T-cell (primary cell): ENCODE measurements at regions of chr1 and their contacts with region 1.

Region 1: GRCh38 chr1:155000726-155001424 is 1.7 kb upstream of the ZBTB7B start:
- DNase-seq: peak in 32 of 35 experiments; percentile 32 to 80 (median 50)
- ATAC-seq: peak; percentile 31 to 44 (median 39)
- H3K4me3 ChIP-seq: peak overlapping the region; percentile 72 to 97
- H3K4me3 Mint-ChIP-seq: peak overlapping the region; percentile 84 to 89 (median 88)
- H3K27ac ChIP-seq: peak overlapping the region; percentile 95
- H3K27ac Mint-ChIP-seq: peak overlapping the region; percentile 84 to 85
- H3K4me1 ChIP-seq: peaks cover 21 to 80% of the 10 kb centered on the region in 2 experiments
- H3K4me1 Mint-ChIP-seq: peaks cover 44 to 52% (median 50%) of the 10 kb centered on the region in 3 donors
- H3K27me3 ChIP-seq: no peaks in the 10 kb centered on the region
- H3K27me3 Mint-ChIP-seq: no peaks in the 10 kb centered on the region

Region 2: DNA sequence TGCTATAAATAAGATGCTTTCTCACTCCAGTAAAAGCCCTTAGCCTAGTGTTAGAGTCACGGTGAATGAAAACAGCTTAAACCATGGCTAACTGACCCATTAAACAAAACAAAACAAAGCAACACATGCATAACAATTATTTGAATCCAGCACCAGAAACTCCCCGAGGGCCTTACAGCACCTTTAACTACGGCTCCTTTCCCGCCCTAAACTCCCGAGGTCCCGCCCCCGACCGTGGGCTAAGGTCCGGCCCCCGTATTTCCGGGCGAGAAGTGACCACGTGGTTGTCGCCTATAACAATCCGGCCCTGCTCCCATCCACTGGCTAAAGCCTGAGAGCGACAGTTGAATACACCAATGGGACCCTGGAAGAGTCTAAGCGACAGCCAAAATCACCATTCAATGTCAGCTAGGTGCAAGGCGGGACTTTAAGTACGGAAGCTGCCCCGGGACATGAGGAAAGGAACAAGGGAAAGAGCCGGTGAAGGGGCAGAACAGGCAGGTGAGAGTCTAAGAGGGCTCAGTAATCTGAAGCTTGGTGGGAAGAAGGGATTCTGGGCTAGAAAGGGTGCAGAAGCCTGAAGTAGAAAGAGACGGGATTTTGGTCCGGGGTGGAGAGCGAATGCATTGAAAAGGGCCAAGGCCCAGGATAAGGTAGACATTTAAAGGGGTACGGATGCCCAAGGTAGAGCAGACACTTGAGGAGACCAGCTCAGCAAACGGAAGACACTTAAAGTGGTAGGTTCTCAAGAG is 17.8 kb before region 1 on chr1 and contains the start of gene FLAD1:
- CTCF ChIA-PET with region 1: interaction called, 3 to 29 read pairs
- POLR2A ChIA-PET with region 1: no interaction called
- DNase-seq: peak; percentile 85 to 98 (median 95)
- ATAC-seq: peak; percentile 99 to 100 (median 100)
- H3K4me3 ChIP-seq: peak within 1 kb of the TSS; percentile 67 to 84
- H3K4me3 Mint-ChIP-seq: no peak within 1 kb of the TSS
- H3K27ac ChIP-seq: peak within 1 kb of the TSS; percentile 54
- H3K27ac Mint-ChIP-seq: no peak within 1 kb of the TSS
- H3K4me1 ChIP-seq: peaks cover 14 to 28% of the 10 kb centered on the region in 2 experiments
- H3K4me1 Mint-ChIP-seq: peaks cover 0 to 17% (median 13%) of the 10 kb centered on the region in 3 donors
- H3K27me3 ChIP-seq: no peaks in the 10 kb centered on the region
- H3K27me3 Mint-ChIP-seq: no peaks in the 10 kb centered on the region
- total RNA-seq, gene FLAD1: 32.8 to 64.3 (median 53.4) TPM

Region 3: DNA sequence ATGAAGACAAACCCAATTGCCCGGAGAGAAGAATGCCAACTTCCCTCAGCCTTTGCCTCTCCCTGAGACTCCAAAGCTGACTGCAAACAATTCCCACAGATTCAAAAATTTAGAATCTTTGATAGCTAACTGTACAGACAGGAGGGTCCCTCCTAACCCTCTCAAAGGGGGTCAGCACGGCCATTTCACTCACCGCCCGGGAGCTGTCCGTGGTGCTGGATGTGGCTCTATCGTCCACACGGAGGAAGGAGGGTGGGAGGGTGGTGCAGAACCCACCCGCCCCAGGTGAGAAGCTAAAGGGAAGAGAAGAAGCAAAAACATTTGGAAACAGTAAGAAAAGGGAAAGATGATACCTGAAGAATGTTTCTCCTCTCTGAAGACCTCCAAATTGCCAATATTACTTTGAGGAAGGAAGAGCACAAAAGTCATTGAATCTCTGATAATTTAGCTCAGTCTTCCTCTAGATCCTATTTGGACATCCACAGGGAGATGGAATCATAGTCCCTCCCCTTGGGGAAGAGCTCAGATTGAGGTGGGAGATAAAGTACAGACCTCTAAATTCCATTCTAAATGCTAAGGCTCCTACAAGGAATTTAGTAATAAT is 1413.7 kb after region 1 on chr1:
- CTCF ChIA-PET with region 1: no interaction called
- POLR2A ChIA-PET with region 1: no interaction called
- DNase-seq: no peak
- ATAC-seq: no peak
- H3K4me3 ChIP-seq: no peak overlapping the region
- H3K4me3 Mint-ChIP-seq: no peak overlapping the region
- H3K27ac ChIP-seq: no peak overlapping the region
- H3K27ac Mint-ChIP-seq: no peak overlapping the region
- H3K4me1 ChIP-seq: peaks cover 0 to 2% of the 10 kb centered on the region in 2 experiments
- H3K4me1 Mint-ChIP-seq: peaks cover 3 to 7% (median 7%) of the 10 kb centered on the region in 3 donors
- H3K27me3 ChIP-seq: peaks cover 35 to 55% of the 10 kb centered on the region in 2 experiments
- H3K27me3 Mint-ChIP-seq: peaks cover 64 to 65% of the 10 kb centered on the region in 2 donors